ENCODE measurements at regions of chr15 and their contacts with region 1.

Region 1: DNA sequence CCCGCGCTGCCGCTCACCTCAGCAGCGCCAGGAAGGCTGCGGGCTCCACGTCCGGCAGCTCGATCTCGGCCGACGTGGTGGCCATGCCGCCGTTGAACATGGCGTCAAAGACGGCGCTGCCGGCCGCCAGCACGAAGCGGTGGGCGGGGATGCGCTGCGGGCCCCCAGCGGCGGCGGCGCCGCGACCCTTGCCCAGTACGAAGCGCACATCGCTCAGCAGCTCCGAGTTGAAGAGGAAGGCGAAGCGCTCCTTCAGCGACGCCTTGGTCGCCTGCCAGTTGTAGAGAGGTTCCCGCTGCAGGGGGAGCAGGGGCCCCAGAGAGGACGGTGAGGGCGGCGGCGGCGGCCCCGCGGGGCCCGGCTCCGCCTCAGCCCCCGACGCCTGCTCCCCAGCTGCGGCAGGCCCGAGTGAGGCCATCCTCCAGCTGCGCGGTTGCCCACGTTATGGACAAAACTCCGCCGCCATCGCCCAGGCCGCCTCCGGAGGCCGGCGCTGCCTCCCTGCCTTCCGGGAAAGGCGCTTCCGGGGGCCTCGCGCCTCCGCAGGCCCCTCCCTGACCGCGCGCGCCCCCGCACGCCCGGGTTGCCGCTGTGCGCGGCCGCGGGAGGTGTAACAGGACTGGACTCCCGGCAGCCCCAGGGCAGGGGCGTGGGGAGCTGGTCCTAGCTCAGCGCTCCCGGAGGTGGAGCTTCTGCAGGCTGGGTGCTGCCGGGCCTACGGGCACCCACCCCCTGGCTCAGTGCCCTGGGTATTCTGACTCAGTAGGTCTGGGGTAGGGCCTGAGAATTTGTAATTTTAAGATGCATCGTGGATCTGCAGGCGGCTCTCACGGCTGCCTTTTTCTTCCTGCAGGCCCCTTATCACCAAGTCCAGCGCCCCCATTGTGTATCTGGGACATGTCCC is at the start of gene BTBD1:
- DNase-seq: peak; percentile 96
- ATAC-seq: peak; percentile 98
- H3K4me3 Mint-ChIP-seq: peak within 1 kb of the TSS; percentile 79
- H3K27ac Mint-ChIP-seq: peak within 1 kb of the TSS; percentile 86
- H3K4me1 Mint-ChIP-seq: peaks cover 20% of the 10 kb centered on the region
- H3K27me3 Mint-ChIP-seq: no peaks in the 10 kb centered on the region
- total RNA-seq, gene BTBD1: 58.3 to 77.6 TPM

Region 2: DNA sequence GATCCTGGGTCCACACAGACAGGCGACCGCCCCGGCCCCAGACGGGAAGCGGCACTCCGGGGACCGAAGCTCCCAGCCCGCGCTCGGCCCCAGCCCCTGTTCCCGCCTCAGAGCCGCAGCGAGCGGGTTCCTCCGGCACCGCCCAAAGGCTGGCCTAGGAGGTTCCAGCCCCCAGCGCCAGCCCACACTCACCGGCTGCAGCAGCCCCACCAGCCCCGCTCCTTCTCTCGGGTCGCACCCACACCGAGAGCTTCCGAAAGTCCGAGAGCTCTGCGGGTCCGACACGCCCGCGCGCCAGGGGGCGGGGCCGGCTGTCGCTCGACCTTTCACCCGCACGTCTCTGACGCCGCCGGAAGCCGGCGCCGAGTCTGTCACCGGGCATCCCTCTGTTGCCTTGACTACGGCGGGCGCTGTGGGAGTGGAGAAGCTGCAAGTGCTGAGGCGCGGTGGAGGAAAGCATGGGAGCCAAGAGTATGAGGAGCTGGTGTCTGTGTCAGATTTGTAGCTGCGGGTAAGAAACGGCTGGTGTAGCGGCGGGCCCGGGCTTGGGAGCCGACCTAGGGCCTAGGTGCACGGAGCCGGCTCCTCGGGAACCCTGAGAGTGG is 804.5 kb before region 1 on chr15 and contains the starts of genes EFL1 and SAXO2:
- CTCF ChIA-PET with region 1: no interaction called
- POLR2A ChIA-PET with region 1: no interaction called
- intact Hi-C with region 1: loop called in 1 of 2 experiments (anchors 5 kb)
- DNase-seq: peak; percentile 94
- ATAC-seq: peak; percentile 91
- H3K4me3 Mint-ChIP-seq: peak within 1 kb of the TSS; percentile 89
- H3K27ac Mint-ChIP-seq: peak within 1 kb of the TSS; percentile 91
- H3K4me1 Mint-ChIP-seq: peaks cover 33% of the 10 kb centered on the region
- H3K27me3 Mint-ChIP-seq: no peaks in the 10 kb centered on the region
- total RNA-seq, gene EFL1: 25.0 to 30.2 TPM
- total RNA-seq, gene SAXO2: 4.4 to 6.9 TPM

Region 3: GRCh38 chr15:82680200-82681102 is 386.5 kb before region 1 on chr15:
- CTCF ChIA-PET with region 1: no interaction called
- POLR2A ChIA-PET with region 1: no interaction called
- intact Hi-C with region 1: loop called in 1 of 2 experiments (anchors 1 kb)
- DNase-seq: peak; percentile 90
- ATAC-seq: peak; percentile 96
- H3K4me3 Mint-ChIP-seq: peak overlapping the region; percentile 80
- H3K27ac Mint-ChIP-seq: peak overlapping the region; percentile 85
- H3K4me1 Mint-ChIP-seq: peaks cover 10% of the 10 kb centered on the region
- H3K27me3 Mint-ChIP-seq: peaks cover 7% of the 10 kb centered on the region

Region 4: GRCh38 chr15:82749951-82750830 is 316.8 kb before region 1 on chr15:
- CTCF ChIA-PET with region 1: no interaction called
- POLR2A ChIA-PET with region 1: no interaction called
- intact Hi-C with region 1: loop called in 1 of 2 experiments (anchors 2 kb)
- DNase-seq: peak; percentile 91
- ATAC-seq: peak; percentile 95
- H3K4me3 Mint-ChIP-seq: peak overlapping the region; percentile 86
- H3K27ac Mint-ChIP-seq: peak overlapping the region; percentile 98
- H3K4me1 Mint-ChIP-seq: peaks cover 44% of the 10 kb centered on the region
- H3K27me3 Mint-ChIP-seq: no peaks in the 10 kb centered on the region

Region 5: GRCh38 chr15:83092309-83092976 is 25.5 kb after region 1 on chr15:
- CTCF ChIA-PET with region 1: no interaction called
- POLR2A ChIA-PET with region 1: no interaction called
- intact Hi-C with region 1: no loop called
- DNase-seq: peak; percentile 28
- ATAC-seq: peak; percentile 82
- H3K4me3 Mint-ChIP-seq: no peak overlapping the region
- H3K27ac Mint-ChIP-seq: peak overlapping the region; percentile 58
- H3K4me1 Mint-ChIP-seq: peaks cover 7% of the 10 kb centered on the region
- H3K27me3 Mint-ChIP-seq: peaks cover 3% of the 10 kb centered on the region

Region 6: DNA sequence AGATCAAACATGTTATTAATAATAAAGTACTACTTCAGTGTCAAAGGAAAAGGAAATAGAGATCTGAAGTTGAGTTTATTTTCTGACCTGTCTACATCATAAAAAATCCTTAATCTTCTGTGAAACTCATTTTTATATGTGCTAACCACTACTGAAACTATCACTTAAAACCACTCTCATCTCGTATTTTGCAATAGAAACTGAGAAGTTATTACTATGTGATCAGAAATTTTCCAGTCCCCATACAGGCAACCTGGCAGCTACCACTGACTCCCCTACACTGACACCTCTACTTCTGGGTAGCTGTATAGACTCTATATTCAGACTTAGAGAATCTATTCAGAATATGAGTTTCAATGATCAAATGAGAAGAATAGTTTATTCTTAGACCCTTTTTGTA is 132.3 kb after region 1 on chr15:
- CTCF ChIA-PET with region 1: no interaction called
- POLR2A ChIA-PET with region 1: no interaction called
- intact Hi-C with region 1: loop called (anchors 2 kb)
- DNase-seq: peak; percentile 37
- ATAC-seq: peak; percentile 91
- H3K4me3 Mint-ChIP-seq: no peak overlapping the region
- H3K27ac Mint-ChIP-seq: no peak overlapping the region
- H3K4me1 Mint-ChIP-seq: peaks cover 20% of the 10 kb centered on the region
- H3K27me3 Mint-ChIP-seq: peaks cover 17% of the 10 kb centered on the region

Measured in activated CD4-positive, alpha-beta T cell treated with anti-CD3 and anti-CD28 coated beads for 36 hours (primary cell).